Activated CD8-positive, alpha-beta T cell treated with anti-CD3 and anti-CD28 coated beads, Interleukin-2, amount 10 ng/mL, durations not matched to agents 7 days and 5 days (primary cell): ENCODE measurements at regions of chr11 and their contacts with region 1.

Region 1: GRCh38 chr11:133115099-133115498 is 417.2 kb downstream of the OPCML start:
- DNase-seq: no peak
- ATAC-seq: no peak
- H3K4me3 Mint-ChIP-seq: no peak overlapping the region
- H3K27ac Mint-ChIP-seq: no peak overlapping the region
- H3K4me1 Mint-ChIP-seq: no peaks in the 10 kb centered on the region
- H3K27me3 Mint-ChIP-seq: no peaks in the 10 kb centered on the region

Region 2: GRCh38 chr11:133134314-133135173 is 19.4 kb after region 1 on chr11:
- CTCF ChIA-PET with region 1: interaction called, 11 read pairs
- POLR2A ChIA-PET with region 1: no interaction called
- DNase-seq: peak; percentile 66
- ATAC-seq: peak; percentile 79
- H3K4me3 Mint-ChIP-seq: no peak overlapping the region
- H3K27ac Mint-ChIP-seq: no peak overlapping the region
- H3K4me1 Mint-ChIP-seq: no peaks in the 10 kb centered on the region
- H3K27me3 Mint-ChIP-seq: peaks cover 3% of the 10 kb centered on the region